ENCODE measurements at regions of chr2 and their contacts with region 1.

Region 1: DNA sequence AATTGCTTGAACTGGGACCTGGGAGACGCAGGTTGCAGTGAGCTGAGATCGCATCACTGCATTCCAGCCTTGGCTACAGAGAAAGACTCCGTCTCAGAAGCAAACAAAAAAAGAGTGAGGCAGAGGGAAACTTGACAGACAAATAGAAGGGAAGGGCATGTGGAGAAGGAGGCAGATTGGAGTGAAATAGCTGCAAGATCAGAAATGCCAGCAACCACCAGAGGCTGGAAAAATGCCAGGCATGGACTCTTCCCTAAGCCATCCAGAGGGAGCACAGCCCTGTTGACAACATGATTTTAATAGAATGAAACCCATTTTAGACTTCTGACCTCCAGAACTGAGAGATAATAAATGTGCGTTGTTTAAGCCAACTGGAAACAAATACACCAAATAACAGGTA is 447.2 kb upstream of the SPHKAP start:
- DNase-seq: no peak
- H3K4me3 ChIP-seq: no peak overlapping the region
- H3K4me3 Mint-ChIP-seq: no peak overlapping the region
- H3K27ac Mint-ChIP-seq: no peak overlapping the region
- H3K4me1 ChIP-seq: peaks cover 14% of the 10 kb centered on the region; the same call in 1 of the 2 replicates
- H3K4me1 Mint-ChIP-seq: peaks cover 16% of the 10 kb centered on the region
- H3K27me3 ChIP-seq: no peaks in the 10 kb centered on the region
- H3K27me3 Mint-ChIP-seq: no peaks in the 10 kb centered on the region
- CTCF ChIP-seq: no peak

Region 2: DNA sequence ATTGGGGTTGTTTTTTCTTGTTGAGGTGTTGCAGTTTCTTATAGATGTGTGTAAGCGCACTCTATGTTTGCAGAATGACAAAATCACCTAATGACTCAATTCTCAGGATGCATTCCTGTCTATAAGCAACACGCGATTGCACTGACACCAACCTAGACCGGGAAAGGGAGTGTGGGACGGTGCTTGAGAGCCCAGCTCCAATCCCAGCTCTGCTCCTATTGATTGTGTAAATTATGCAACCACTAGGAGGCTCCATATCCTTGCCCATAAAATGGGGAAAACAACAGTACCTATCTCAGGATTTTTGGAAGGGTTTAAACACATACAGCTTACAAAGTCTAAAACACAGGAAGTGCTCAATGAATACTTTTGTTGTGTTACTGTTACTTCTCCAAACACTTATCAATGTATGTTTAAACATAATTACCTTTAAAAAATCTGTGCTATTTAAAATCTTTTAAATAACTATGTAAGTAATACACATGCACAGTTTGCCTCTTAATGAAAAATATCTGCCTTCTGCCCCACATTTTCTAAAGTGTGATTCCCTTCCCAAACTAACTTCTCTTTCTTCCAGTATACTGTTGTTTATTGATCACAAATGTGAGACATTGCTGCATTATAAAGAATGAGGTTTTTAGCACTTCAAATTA is 579.7 kb before region 1 on chr2:
- CTCF ChIA-PET with region 1: no interaction called
- POLR2A ChIA-PET with region 1: no interaction called
- intact Hi-C with region 1: no loop called
- DNase-seq: peak; percentile 37 to 46
- H3K4me3 ChIP-seq: no peak overlapping the region
- H3K4me3 Mint-ChIP-seq: no peak overlapping the region
- H3K27ac Mint-ChIP-seq: no peak overlapping the region
- H3K4me1 ChIP-seq: no peaks in the 10 kb centered on the region
- H3K4me1 Mint-ChIP-seq: no peaks in the 10 kb centered on the region
- H3K27me3 ChIP-seq: no peaks in the 10 kb centered on the region
- H3K27me3 Mint-ChIP-seq: peaks cover 6% of the 10 kb centered on the region
- CTCF ChIP-seq: peak; percentile 26 to 63

Region 3: DNA sequence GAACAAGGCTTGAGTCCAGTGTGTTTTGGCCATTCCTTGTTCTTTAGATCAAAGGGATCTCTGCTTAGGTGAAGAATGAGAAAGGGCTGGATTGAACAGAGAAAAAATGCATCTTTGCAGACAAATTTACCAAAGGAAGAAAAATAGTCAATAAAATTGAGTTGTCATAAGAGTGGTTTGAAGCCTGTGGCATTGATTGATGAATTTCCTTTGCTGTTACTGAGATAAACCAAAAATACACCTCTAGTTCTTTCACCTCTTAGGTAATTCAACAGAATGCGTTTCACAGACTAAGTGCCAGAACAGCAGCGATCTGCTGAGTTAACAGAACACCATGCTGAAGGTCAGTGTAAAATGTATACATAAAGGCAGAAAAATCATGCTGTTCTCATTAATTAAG is 544.0 kb before region 1 on chr2:
- CTCF ChIA-PET with region 1: no interaction called
- POLR2A ChIA-PET with region 1: no interaction called
- intact Hi-C with region 1: loop called (anchors 5 kb)
- DNase-seq: no peak
- H3K4me3 ChIP-seq: no peak overlapping the region
- H3K4me3 Mint-ChIP-seq: no peak overlapping the region
- H3K27ac Mint-ChIP-seq: no peak overlapping the region
- H3K4me1 ChIP-seq: no peaks in the 10 kb centered on the region
- H3K4me1 Mint-ChIP-seq: no peaks in the 10 kb centered on the region
- H3K27me3 ChIP-seq: no peaks in the 10 kb centered on the region
- H3K27me3 Mint-ChIP-seq: no peaks in the 10 kb centered on the region
- CTCF ChIP-seq: no peak

Region 4: GRCh38 chr2:228458364-228458763 is 170.3 kb before region 1 on chr2:
- CTCF ChIA-PET with region 1: no interaction called
- POLR2A ChIA-PET with region 1: no interaction called
- intact Hi-C with region 1: no loop called
- DNase-seq: no peak
- H3K4me3 ChIP-seq: no peak overlapping the region
- H3K4me3 Mint-ChIP-seq: no peak overlapping the region
- H3K27ac Mint-ChIP-seq: no peak overlapping the region
- H3K4me1 ChIP-seq: no peaks in the 10 kb centered on the region
- H3K4me1 Mint-ChIP-seq: no peaks in the 10 kb centered on the region
- H3K27me3 ChIP-seq: no peaks in the 10 kb centered on the region
- H3K27me3 Mint-ChIP-seq: no peaks in the 10 kb centered on the region
- CTCF ChIP-seq: no peak

Region 5: DNA sequence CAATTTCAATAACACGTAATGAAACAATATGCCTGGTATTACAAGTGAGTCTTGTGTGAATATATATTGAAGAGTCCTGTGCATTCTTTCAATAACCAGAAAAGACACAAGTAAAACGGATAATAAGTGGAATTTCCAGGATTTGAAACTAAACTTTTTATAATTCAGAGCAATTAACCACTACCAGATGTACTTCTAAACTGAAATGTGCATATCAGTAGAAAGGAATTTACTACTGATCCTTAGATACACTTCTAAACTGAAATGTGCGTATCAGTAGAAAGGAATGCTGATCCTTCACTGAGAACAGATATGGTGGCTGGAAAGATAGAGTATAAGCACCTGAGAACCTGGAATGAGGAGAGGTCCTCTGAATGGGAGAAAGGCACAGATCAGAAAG is 23.7 kb after region 1 on chr2:
- CTCF ChIA-PET with region 1: no interaction called
- POLR2A ChIA-PET with region 1: no interaction called
- intact Hi-C with region 1: loop called (anchors 2 kb)
- DNase-seq: peak in 1 of 2 experiments; percentile 13
- H3K4me3 ChIP-seq: no peak overlapping the region
- H3K4me3 Mint-ChIP-seq: no peak overlapping the region
- H3K27ac Mint-ChIP-seq: no peak overlapping the region
- H3K4me1 ChIP-seq: peaks cover 29% of the 10 kb centered on the region
- H3K4me1 Mint-ChIP-seq: no peaks in the 10 kb centered on the region
- H3K27me3 ChIP-seq: no peaks in the 10 kb centered on the region
- H3K27me3 Mint-ChIP-seq: no peaks in the 10 kb centered on the region
- CTCF ChIP-seq: no peak